GM10248 (cell line): ENCODE measurements at regions of chr5 and their contacts with region 1.

Region 1: GRCh38 chr5:172932313-172933017 is 26.8 kb upstream of the RPL26L1 start:
- DNase-seq: peak; percentile 86
- CTCF ChIP-seq: peak; percentile 96

Region 2: DNA sequence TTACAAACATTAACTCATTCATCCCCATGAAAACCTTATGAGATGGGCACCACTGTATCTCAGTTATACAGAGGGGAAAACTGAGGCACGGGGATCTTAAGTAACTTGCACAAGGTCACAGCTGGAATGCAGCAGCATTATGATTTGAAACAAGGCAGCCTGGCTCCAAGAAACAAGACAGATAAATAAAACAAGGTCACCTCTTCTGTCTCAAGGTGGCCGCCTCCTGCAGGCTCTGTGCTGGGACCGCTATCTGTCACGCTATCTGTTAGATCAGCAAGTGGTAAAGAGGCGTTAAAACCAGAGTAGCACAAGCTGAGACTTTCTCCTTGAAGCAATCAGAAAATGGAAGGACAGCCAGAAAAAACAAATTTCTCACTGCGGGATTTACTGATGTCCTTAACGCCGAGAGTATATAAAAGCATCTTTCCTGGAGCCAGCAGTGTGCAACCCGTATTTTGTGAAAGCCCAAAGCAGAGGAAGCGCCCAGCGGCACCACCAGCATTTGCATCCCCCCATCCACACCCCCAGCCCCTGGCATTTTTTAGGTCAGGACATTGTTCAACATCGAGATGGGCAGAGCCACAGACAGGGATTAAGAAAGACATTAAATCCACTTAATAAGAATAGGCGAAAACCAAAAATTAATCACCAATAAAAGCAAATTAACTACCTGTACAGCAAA is 210.2 kb before region 1 on chr5:
- CTCF ChIA-PET with region 1: interaction called, 41 read pairs
- POLR2A ChIA-PET with region 1: no interaction called
- DNase-seq: no peak
- CTCF ChIP-seq: no peak

Region 3: DNA sequence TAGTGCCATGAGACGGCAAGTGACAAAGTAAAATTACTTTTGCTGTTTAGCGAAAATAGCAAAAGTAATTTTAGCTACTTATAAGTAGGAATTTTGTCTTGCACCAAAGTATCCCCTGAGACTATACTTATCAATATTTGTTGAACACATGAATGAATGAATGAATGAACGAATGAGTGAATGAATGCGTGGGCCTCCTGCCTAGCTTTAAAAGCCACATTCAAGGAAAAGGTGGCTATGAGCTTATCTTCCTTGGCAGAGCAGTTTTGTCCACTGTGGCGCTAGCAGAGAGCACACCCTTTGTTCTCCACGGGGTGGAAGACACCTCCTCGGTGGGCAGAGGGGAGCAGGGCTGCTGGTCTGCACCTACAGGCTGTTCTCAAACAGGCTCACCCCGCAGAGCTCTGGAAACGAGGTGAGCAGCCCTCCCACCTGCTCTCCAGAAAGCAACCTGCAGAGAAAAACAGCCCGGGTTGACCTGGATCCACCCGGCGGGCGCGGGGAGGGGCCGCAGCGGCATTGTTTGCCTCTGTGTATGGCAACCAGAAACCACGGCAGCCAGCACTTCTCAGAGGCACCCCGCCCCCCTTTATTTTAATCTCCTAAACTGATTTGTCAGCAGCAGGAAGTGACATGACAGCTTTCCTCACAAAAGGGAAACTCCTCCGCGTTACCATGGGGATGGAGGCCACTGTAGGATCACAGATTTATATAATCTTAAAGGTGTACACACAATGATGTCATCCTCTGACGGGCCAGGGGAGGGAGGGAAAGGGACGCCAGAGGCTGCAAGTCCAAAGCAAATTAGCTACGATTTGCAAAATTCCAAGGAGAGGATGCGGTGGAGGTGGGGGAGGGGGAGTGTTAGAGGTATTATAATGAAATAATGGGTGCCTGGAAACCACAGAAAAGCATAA is 167.4 kb before region 1 on chr5:
- CTCF ChIA-PET with region 1: interaction called, 12 read pairs
- POLR2A ChIA-PET with region 1: no interaction called
- DNase-seq: peak; percentile 93
- CTCF ChIP-seq: no peak

Region 4: DNA sequence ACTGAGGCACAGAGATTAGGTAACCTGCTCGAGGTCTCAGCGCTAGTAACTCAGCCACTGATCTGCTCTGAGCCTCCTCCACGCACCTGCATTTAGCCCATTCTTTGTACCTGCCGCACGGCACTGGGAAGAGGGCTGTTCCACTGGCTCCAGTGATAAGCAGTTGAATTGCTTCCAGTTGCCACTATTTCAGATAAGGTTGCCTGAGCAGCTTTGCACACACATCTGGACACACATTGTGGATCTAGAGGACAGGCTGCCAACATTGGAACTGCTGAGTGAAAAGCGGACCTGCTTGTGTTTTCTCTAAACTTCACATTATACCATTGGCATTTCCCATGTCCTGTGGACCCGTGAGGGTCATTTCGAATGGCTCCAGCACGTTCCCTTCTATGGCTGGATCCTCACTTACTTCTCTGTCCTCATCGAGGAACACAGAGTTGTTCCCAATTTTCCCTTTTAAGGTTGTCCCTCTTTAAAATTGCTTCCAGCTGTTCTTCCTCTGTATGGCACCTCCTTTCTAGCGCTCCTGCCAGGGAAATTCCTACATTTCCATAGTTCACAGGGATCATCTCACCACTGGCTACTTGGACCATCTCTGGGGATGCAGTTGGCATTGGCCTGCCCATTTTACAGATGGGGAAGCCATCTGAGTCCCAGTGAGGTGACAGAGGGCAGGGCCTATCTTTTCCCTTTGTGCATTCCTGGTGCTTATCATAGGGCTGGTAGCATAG is 19.2 kb before region 1 on chr5:
- CTCF ChIA-PET with region 1: interaction called, 20 read pairs
- POLR2A ChIA-PET with region 1: no interaction called
- DNase-seq: no peak
- CTCF ChIP-seq: no peak

Region 5: GRCh38 chr5:172949426-172949825 is 17.0 kb after region 1 on chr5:
- CTCF ChIA-PET with region 1: interaction called, 25 read pairs
- POLR2A ChIA-PET with region 1: no interaction called
- DNase-seq: no peak
- CTCF ChIP-seq: no peak